ENCODE measurements at regions of chr3 and their contacts with region 1.

Region 1: DNA sequence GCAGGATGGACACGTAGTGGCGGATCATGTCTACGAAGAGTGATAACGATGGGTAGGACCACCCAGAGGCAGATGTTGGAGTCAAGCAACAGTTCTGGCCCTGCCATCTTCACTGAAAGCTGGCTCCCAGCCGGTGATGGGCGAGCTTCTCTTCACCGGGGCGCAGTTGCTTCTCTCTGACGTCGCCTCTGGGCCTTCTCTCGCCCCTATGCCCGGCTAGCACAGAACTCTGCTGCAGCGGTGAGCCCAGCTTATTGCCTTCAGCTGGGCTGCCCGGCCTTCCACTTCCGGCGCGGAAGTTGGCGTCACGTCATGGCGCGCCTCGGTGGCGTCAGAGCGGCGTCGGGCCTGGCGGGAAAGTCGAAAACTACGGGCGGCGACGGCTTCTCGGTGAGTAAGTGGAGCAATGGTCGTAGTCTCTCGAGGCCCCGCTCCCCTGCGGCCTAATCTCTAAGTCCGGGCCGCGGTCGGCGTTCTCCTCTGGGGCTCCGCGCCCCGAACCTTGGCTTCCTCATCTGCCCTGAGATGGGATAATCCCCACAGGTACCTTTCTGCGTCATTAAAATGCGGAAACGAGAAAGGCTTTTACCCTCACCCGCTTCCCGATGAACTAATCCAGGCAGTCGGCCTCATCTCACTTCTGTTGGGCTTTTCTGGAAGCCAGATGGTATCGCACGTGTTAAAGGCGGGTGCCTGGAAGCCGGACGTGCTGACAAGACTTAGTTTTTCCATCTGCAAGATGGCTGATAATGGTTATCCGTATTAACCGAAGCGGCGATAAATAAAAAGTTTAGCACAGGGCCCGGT is at the start of gene FANCD2:
- DNase-seq: peak; percentile 55
- H3K4me3 ChIP-seq: peak within 1 kb of the TSS; percentile 90
- H3K27ac ChIP-seq: peak within 1 kb of the TSS; percentile 65
- H3K27me3 ChIP-seq: no peaks in the 10 kb centered on the region
- CTCF ChIP-seq: no peak
- polyA plus RNA-seq, gene FANCD2: 3.6 and 5.4 TPM in 2 replicates

Region 2: DNA sequence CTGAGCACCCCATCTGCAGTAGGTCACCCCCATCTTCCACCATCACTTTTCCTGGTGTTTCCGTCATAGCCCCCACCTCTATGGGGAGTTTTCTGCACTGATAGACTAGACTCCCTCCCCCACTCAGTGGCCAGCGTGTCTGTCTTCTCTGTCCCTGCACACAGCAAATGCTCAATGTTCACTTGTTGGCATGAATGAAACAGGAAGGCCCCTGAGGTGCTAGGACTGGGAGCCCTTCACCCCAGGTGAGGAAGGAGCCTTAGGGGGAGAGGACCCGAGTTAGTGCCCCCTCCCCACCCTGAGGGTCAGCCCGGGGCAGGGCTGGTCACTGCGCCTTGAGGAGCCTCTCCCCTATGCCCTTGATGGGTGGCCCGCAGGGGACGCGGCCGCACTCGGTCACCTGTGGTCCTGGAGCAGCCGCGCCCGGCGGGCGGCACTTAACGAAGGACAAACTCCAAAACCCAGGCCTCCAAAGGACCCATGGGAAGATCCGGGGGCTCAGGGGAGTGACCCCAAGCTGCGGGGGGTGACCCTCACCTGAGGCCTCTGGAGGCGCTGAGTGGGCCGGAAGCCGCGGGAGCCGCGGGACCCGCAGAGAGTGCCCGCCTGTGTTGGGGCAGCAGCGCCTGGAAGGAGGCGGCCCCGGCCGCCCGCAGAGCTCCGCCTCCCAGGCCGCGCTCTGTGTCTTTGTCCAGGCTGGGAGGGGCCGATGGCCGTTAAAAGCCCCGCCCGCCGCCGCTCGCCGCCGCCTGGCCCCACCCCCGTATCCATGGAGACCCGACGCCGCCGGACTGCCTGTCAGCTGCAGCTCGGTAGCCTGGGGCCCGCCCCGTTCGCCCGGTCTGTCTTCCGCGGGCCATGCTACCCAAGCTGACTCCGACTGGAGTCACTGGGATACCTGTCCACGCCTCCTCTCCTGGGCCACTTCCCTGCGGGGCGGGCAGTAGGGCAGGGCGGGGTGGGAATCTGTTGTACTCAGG is 15.5 kb before region 1 on chr3:
- CTCF ChIA-PET with region 1: interaction called, 3 read pairs
- POLR2A ChIA-PET with region 1: interaction called, 11 read pairs
- DNase-seq: peak; percentile 55
- H3K4me3 ChIP-seq: peak overlapping the region; percentile 78
- H3K27ac ChIP-seq: no peak overlapping the region
- H3K27me3 ChIP-seq: no peaks in the 10 kb centered on the region
- CTCF ChIP-seq: no peak

Region 3: GRCh38 chr3:10041034-10041433 is 14.7 kb after region 1 on chr3:
- CTCF ChIA-PET with region 1: no interaction called
- POLR2A ChIA-PET with region 1: no interaction called
- DNase-seq: no peak
- H3K4me3 ChIP-seq: no peak overlapping the region
- H3K27ac ChIP-seq: no peak overlapping the region
- H3K27me3 ChIP-seq: no peaks in the 10 kb centered on the region
- CTCF ChIP-seq: no peak